ENCODE measurements at regions of chr1 and their contacts with region 1.

Region 1: GRCh38 chr1:58903514-58904298 is 119.9 kb upstream of the JUN start:
- DNase-seq: peak; percentile 97 to 98
- ATAC-seq: peak; percentile 98
- H3K4me3 ChIP-seq: peak overlapping the region; percentile 24 to 42
- H3K27ac ChIP-seq: peak overlapping the region; percentile 83 to 94
- H3K4me1 ChIP-seq: no peaks in the 10 kb centered on the region
- H3K27me3 ChIP-seq: no peaks in the 10 kb centered on the region

Region 2: GRCh38 chr1:58816072-58816746 is 87.5 kb before region 1 on chr1:
- intact Hi-C with region 1: loop called (anchors 1 to 10 kb)
- DNase-seq: peak; percentile 96 to 97
- ATAC-seq: peak; percentile 94
- H3K4me3 ChIP-seq: peak overlapping the region; percentile 57 to 68
- H3K27ac ChIP-seq: peak overlapping the region; percentile 94
- H3K4me1 ChIP-seq: no peaks in the 10 kb centered on the region
- H3K27me3 ChIP-seq: no peaks in the 10 kb centered on the region

Region 3: DNA sequence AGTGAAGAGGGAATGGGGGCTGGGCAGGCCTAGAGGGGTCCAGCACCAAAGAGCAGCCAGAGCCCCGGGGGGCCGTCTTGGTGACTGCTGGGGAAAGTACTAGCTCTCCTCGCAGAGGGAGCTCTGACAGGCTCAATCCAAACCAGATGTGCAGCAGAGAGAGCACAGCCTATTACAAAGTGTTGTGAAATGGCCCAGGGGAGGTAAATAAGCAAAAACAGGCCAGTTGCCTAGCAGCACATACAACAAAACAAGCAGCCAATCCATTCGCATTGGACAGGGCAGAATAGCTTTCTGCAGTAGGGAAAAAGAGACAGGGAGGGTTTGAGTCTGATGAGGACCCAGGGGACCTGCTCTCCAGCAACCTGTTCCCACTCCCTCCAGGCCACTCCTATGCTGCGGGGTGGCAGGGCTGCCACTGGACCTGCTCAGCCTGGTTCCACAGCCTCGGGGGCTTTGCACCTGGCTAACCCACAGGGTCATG is 153.5 kb after region 1 on chr1:
- intact Hi-C with region 1: loop called in 1 of 2 experiments (anchors 5 kb)
- DNase-seq: peak; percentile 75 to 87
- ATAC-seq: peak; percentile 91
- H3K4me3 ChIP-seq: no peak overlapping the region
- H3K27ac ChIP-seq: peak overlapping the region in 1 of 2 donors; percentile 71
- H3K4me1 ChIP-seq: peaks cover 0 to 2% of the 10 kb centered on the region in 2 donors
- H3K27me3 ChIP-seq: no peaks in the 10 kb centered on the region

Region 4: DNA sequence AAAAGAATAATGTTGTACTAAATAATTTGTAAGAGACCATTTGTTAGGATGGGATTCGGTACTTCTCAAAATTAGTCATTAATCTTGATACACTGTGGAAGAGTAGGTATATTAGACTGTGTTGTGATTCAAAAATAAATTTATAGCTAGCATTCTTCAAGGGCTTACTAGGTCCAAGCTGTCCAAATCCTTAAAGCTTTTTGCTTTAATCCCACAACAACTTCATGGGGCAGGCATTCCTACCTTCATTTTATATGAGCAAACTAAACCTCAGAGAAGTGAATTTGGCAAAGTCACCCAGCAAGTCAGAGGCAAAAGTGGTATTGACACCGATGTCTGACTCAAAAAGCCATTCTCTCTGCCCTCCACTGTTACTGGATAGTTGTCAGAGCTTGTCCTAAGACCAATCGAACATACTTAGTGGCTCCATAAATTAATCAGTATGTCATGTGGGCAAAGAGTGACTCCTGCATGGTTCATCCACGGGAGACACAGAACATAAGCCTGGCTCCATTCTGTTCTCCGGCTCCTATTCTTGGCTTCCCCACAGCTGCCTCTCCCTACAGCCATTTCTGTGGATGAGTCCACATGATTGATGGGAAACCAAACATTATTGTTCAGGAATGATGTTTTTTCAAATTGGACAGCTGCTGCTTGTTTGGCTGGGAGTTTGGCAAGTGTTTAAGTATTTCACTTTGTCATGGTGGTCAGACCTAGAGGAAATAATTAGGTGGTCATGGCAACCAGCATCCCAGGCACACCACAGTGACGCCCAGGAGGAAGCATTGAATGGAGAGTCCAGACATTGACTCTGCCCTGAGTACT is 259.8 kb after region 1 on chr1:
- intact Hi-C with region 1: loop called in 1 of 2 experiments (anchors 10 kb)
- DNase-seq: no peak
- ATAC-seq: no peak
- H3K4me3 ChIP-seq: no peak overlapping the region
- H3K27ac ChIP-seq: peak overlapping the region; percentile 67 to 82
- H3K4me1 ChIP-seq: peaks cover 9 to 16% of the 10 kb centered on the region in 2 donors
- H3K27me3 ChIP-seq: no peaks in the 10 kb centered on the region

Region 5: DNA sequence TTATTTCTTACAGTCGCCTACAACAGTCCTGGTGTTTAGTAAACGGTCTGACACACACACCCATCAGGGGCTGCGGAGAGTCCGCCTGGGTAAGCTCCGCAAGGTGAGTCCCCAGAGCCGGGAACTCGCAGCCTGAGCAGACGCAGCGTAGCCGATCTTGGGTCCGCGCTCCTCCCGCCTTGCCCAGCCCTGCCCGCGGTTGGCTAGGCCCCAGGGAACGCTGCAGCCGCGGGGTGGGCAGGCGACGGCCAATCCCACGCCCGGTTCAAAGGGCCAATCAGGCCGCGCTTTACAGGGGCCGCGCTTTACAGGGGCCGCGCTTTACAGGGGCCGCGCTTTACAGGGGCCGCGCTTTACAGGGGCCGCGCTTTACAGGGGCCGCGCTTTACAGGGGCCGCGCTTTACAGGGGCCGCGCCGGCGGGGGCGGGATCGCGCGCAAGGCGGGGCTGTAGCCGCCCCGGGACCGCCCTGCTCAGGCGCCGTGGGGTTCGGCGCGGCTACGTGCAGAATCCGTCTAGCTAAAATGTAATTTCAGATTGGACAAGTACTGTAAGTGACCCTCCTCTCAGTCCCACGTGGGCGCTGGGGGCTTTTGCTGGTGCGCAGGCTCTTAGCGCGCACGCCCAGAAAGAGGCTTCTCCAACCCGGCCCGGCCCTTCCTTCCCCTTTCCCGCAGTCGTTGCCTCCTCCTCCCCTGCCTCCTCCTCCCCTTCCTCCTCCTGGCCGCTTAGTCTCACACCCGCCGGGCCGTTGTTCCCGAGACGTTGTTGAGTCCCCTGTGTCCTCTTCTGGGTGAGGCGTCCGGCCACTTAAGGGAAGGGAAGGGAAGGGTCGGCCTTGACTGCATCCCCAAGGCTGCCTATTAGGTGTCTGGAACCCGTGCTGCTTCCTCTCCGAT is 392.9 kb after region 1 on chr1 and contains the start of gene FGGY:
- intact Hi-C with region 1: loop called in 1 of 2 experiments (anchors 5 kb)
- DNase-seq: peak; percentile 98 to 100
- ATAC-seq: peak; percentile 96
- H3K4me3 ChIP-seq: peak within 1 kb of the TSS; percentile 54 to 75
- H3K27ac ChIP-seq: peak within 1 kb of the TSS; percentile 87 to 93
- H3K4me1 ChIP-seq: peaks cover 3 to 5% of the 10 kb centered on the region in 2 donors
- H3K27me3 ChIP-seq: no peaks in the 10 kb centered on the region
- total RNA-seq, gene FGGY: 17.3 to 25.1 TPM

Region 6: DNA sequence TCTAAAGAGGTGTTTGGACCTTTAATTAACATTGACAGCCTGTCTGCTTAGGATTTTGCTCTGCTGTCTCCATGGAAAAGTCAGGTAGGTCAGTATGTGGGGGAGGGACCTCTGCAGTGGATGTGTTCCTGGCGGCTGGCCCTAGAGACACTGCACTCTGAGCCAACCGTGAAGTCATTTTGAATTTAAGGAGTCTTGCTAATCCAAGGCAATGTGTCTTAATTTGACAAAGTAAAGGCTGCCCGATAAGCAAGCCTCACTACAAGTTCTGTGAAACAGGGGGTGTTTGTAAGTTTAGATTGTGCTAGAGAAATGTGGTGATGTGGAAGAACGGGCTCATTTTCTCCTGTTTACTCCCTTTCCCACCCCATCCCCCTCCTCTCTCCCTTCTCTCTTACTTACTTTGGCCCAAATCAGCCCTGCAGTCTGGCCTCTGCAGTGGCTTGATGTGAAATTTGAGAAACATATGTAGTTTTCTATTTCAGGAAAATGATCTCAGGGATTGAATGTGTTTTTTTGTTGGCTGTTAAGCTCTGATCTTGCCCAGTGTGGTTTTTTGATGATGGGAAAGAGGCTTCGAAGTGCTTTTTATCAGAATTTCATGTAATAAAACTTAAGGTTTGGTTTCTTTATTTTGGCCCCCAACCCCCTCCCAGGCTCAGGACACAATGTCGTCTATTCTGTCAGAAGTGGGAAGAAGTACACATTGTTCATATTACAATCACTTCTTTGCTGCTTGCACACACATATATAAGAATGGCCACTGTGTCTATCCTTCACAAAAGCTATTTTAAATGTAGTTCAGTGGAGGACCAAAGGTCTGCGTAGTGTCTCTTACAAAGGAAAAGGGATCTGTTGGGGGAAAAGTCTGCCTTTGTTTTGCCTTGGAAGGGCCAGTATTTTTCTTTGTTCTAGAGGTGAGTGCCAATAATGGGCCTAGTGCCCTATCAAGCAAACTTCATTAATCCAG is 489.8 kb after region 1 on chr1:
- intact Hi-C with region 1: loop called in 1 of 2 experiments (anchors 5 kb)
- DNase-seq: peak; percentile 85 to 89
- ATAC-seq: peak; percentile 95
- H3K4me3 ChIP-seq: no peak overlapping the region
- H3K27ac ChIP-seq: peak overlapping the region; percentile 93 to 100
- H3K4me1 ChIP-seq: peaks cover 6% of the 10 kb centered on the region in 2 donors
- H3K27me3 ChIP-seq: no peaks in the 10 kb centered on the region